Activated naive CD4-positive, alpha-beta T cell treated with anti-CD3 and anti-CD28 coated beads for 36 hours (primary cell): ENCODE measurements at regions of chr4 and their contacts with region 1.

Region 1: GRCh38 chr4:82044142-82044993 is 329.4 kb downstream of the HNRNPD start:
- DNase-seq: peak; percentile 18
- H3K4me3 Mint-ChIP-seq: peak overlapping the region; percentile 12
- H3K27ac Mint-ChIP-seq: no peak overlapping the region
- H3K4me1 Mint-ChIP-seq: peaks cover 19% of the 10 kb centered on the region
- H3K27me3 Mint-ChIP-seq: peaks cover 44% of the 10 kb centered on the region

Region 2: DNA sequence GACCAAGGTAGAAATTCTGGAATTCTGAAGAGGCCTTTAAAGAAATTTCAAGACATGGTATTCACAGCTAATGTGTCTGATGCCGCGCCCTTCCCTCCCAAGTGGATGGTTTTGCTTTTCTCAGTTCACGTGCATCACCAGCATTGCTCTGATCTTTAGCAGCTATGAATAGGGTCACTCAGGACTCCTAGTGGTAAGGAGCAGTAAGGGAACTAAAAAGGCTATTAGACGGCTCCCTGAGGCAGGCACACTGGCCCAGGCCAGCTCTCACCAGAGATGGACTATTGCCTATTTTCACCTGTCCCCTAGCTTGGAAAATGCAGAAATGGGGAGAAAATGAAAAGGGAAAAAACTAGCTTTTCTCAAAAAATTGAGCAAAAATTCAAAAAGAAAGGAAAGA is 125.1 kb before region 1 on chr4:
- CTCF ChIA-PET with region 1: no interaction called
- intact Hi-C with region 1: loop called (anchors 5 kb)
- DNase-seq: no peak
- H3K4me3 Mint-ChIP-seq: no peak overlapping the region
- H3K27ac Mint-ChIP-seq: no peak overlapping the region
- H3K4me1 Mint-ChIP-seq: peaks cover 6% of the 10 kb centered on the region
- H3K27me3 Mint-ChIP-seq: peaks cover 11% of the 10 kb centered on the region